Transverse colon (tissue), 4 donors: ENCODE measurements at regions of chr11 and their contacts with region 1.

Region 1: DNA sequence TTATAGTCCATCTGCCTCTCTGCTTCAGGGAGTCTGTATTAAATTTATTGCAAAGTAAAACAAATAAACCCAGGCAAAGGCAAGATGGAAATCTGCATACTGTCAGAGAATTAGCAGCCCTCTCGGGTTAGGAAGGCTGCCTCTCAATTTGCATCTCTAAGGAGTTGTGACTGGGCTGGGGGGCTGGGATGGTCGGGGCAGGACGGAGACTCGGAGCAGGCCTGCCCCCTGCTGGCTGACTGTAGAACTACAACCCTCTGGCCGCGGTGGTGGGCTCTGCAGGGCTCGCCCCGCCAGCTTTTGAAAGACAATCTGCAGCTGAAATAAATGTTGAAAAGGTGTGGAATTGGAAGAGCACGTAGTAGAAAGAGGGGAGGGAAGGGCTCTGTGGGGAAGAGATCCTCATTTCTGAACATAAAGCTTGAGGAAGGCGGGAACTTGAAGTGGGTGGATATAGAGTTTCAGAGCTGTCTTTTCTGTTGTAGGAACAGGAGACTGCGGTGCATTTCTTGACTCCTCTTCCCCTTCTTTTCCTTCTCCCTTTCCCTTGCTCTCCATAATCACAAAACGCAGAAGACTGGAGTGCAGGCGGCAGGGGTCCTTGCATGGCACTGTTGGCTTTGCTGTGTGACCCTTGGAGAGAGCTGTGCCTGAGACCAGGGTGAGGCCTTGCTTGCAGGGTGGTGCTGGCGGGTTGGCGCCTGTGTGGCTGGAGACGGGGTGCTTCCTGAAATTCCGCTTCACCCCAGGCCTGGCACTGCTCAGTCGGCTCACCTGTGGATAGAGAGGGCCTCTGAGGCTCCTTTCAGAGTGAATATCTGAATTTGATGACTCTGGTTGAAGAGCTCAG is 22.6 kb upstream of the PKNOX2 start:
- DNase-seq: peak; percentile 30
- H3K4me3 ChIP-seq: no peak overlapping the region
- H3K27ac ChIP-seq: no peak overlapping the region
- H3K4me1 ChIP-seq: peaks cover 0 to 4% (median 0%) of the 10 kb centered on the region in 4 donors
- H3K27me3 ChIP-seq: peaks cover 28% of the 10 kb centered on the region
- CTCF ChIP-seq: peak; percentile 87 to 98 (median 96)
- EP300 ChIP-seq: no peak
- POLR2A ChIP-seq: no peak

Region 2: GRCh38 chr11:124961972-124962609 is 179.8 kb before region 1 on chr11:
- in situ Hi-C with region 1: loop called in 3 of 4 experiments (anchors 10 to 25 kb)
- intact Hi-C with region 1: loop called (anchors 5 kb)
- DNase-seq: no peak
- H3K4me3 ChIP-seq: no peak overlapping the region
- H3K27ac ChIP-seq: no peak overlapping the region
- H3K4me1 ChIP-seq: no peaks in the 10 kb centered on the region
- H3K27me3 ChIP-seq: no peaks in the 10 kb centered on the region
- CTCF ChIP-seq: peak; percentile 58 to 76 (median 60)
- EP300 ChIP-seq: no peak
- POLR2A ChIP-seq: no peak

Region 3: DNA sequence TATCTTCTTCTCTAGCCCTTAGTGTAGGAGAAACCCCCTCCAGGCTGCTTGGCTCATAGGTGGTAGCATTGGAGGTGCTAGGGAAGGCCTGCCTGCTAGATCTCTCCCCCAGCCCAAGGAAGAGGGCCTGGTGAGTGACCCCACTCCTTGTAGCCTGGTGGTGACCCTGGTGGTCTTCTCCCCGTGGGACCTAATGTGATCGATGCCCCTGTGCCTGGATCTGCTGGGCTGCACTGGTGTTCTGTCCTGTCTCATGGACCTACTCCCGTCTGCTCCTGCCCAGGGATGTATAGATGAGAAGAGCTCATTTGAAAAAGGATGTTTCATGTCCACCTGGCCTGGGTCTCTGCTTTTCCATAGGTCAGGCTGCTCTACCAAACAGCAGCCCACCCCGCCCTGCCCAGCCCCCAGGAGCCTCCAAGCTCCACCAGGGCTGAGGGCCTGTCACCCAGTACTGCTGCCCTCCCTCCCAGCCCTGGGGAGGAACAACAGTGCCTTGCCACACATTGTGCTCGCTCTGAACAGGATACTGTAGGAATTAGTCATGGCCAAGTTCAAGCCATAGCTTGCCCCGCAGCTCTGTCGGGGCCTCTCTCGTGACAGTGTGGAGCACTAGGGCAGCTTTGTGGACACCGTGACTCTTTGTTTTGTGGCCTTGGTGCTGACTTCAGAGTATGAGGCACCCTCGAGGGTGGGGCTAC is 59.1 kb before region 1 on chr11:
- in situ Hi-C with region 1: loop called in 1 of 4 experiments (anchors 10 kb)
- intact Hi-C with region 1: no loop called
- DNase-seq: no peak
- H3K4me3 ChIP-seq: no peak overlapping the region
- H3K27ac ChIP-seq: no peak overlapping the region
- H3K4me1 ChIP-seq: no peaks in the 10 kb centered on the region
- H3K27me3 ChIP-seq: no peaks in the 10 kb centered on the region
- CTCF ChIP-seq: no peak
- EP300 ChIP-seq: no peak
- POLR2A ChIP-seq: no peak